ENCODE measurements at regions of chr9 and their contacts with region 1.

Region 1: GRCh38 chr9:81305561-81306182 is 383.7 kb downstream of the TLE1 start:
- DNase-seq: no peak

Region 2: GRCh38 chr9:81506941-81507864 is 201.5 kb after region 1 on chr9:
- intact Hi-C with region 1: loop called (anchors 10 kb)
- DNase-seq: no peak

Measured in cardiac septum (tissue), 1 donor.